ENCODE measurements at regions of chr13 and their contacts with region 1.

Region 1: DNA sequence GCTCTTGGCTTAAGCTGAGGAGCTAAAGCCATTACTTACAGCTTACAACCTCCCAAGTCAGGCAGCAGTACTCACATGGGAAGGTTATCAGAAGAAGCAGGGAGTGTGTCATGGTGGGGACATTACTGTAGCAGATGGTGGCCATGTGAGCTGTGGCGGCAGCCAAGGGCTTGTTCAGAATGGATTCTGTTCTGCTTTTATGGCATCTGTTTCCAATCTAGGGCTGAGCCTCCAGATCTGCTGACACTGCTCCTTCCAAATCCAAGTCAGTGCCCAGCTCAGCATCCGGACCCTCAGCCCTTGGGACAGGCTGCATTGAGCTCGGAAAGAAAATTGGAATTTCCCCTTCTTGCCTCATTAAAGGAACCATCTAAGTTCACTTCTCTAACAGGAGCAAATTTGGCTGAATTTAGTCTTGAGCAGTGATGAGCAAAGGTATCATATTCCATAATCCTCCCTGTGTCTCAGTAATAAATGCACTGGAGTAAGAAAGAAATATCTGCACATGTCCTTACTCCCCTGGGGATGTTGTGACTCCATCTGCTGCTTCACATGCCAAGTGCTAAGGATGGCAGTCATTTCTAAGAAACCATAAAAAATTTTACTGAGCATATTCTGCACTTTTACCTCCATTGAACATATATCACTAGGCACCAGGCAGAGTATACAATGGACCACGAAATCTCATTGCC is 73.9 kb downstream of the KCTD12 start:
- DNase-seq: peak; percentile 57 to 85 (median 65)
- ATAC-seq: peak; percentile 55 to 88 (median 86)
- H3K4me3 ChIP-seq: no peak overlapping the region
- H3K27ac ChIP-seq: peak overlapping the region in 9 of 12 donors; percentile 4 to 67 (median 50)
- H3K4me1 ChIP-seq: peaks cover 0 to 33% (median 19%) of the 10 kb centered on the region in 12 donors
- H3K27me3 ChIP-seq: no peaks in the 10 kb centered on the region
- CTCF ChIP-seq: no peak
- POLR2A ChIP-seq: no peak

Region 2: DNA sequence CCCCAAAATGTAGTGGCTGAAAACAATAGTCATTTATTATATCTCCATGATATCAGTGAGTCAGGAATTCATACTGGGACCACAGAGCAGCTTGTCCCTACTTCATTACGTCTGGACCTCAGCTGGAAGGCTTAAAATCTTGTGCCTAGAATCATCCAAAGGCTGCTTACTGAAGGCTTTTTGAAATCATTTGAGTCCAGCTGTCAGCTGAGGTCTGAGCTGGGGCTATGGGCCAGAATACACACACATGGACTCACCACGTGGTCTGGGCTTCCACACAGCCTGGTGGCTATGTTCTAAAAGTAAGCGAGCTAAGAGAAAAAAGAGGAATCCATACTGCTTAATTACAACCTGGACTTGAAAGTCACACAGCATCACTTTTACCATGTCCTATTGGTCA is 135.3 kb before region 1 on chr13:
- intact Hi-C with region 1: loop called in 1 of 10 experiments (anchors 10 kb)
- DNase-seq: peak; percentile 60 to 74 (median 66)
- ATAC-seq: peak; percentile 71 to 96 (median 94)
- H3K4me3 ChIP-seq: no peak overlapping the region
- H3K27ac ChIP-seq: peak overlapping the region in 5 of 12 donors; percentile 8 to 41 (median 20)
- H3K4me1 ChIP-seq: peaks cover 0 to 7% (median 0%) of the 10 kb centered on the region in 12 donors
- H3K27me3 ChIP-seq: no peaks in the 10 kb centered on the region
- CTCF ChIP-seq: no peak
- POLR2A ChIP-seq: no peak

Region 3: DNA sequence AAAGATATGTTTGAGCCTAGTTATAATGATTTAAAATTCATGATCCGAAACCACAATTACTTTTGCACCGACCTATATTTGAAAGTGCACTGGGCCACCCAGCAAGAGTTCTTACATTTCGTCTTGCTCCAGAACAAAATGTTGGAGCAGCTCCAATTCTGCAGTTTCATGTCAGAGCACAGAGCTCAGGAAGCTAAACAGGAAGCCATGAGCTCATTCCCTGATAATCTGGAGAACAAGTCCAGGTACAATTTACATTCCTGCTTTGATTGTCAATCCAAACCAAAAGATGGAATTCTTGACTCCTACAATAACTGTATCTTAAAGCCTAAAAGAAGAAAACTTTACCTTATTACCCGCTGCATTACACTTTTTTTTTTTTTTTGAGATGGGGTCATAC is 57.9 kb before region 1 on chr13:
- intact Hi-C with region 1: loop called in 1 of 10 experiments (anchors 10 kb)
- DNase-seq: peak in 4 of 5 donors; percentile 27 to 70 (median 52)
- ATAC-seq: peak; percentile 71 to 92 (median 76)
- H3K4me3 ChIP-seq: no peak overlapping the region
- H3K27ac ChIP-seq: peak overlapping the region in 9 of 12 donors; percentile 6 to 62 (median 31)
- H3K4me1 ChIP-seq: peaks cover 0 to 40% (median 1%) of the 10 kb centered on the region in 12 donors
- H3K27me3 ChIP-seq: no peaks in the 10 kb centered on the region
- CTCF ChIP-seq: no peak
- POLR2A ChIP-seq: no peak

Region 4: DNA sequence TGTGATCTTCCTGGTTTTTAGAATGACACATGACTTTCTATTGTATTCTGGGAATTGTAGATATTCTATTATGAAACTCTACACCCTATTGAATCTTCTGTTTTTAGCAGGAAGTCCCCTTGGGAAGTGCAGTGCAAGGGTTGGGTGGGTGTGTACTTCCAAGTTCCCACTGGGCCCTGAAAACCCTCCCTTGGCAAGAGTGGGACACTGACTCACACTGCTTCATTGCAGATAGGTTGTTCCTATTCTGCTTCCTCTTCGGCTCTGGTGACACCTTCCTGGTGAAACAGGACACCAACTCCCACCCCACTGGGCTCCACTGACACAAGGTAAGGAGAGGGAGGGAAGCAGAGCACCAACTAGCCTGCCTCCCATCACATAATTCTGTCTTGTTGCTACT is 47.9 kb before region 1 on chr13:
- intact Hi-C with region 1: loop called in 2 of 10 experiments (anchors 5 to 10 kb)
- DNase-seq: peak; percentile 63 to 87 (median 83)
- ATAC-seq: peak; percentile 95 to 99 (median 98)
- H3K4me3 ChIP-seq: peak overlapping the region in 8 of 12 donors; percentile 14 to 31 (median 26)
- H3K27ac ChIP-seq: peak overlapping the region; percentile 56 to 86 (median 75)
- H3K4me1 ChIP-seq: peaks cover 0 to 34% (median 16%) of the 10 kb centered on the region in 12 donors
- H3K27me3 ChIP-seq: no peaks in the 10 kb centered on the region
- CTCF ChIP-seq: no peak
- POLR2A ChIP-seq: no peak

Region 5: DNA sequence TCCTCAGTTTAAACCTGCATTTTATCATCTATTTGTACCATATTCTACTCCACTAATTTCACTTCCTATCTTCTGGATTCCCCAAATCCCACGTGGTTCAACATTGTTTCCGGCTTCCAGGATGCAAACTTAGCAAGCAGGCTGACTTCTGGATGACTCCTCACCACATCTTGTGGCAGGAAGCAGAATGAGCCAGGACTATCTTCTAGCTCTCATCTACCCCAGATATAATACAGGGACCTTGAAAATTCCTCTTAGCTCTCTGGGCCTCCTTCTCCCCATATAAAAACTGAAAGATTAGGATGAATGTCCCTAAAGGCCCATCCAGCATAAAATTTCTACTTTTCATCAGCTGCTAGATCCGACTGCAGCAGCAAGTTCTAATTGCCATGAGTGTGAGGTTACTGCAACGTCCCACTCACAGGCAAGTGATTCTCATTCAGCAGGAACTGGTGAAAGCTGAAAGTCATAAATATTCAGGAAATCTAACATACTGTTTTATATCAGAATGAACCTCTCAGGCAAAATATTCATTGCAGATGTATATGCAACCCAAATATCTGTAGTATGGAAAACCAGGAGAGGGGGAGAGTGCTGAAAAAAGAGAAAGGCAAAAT is 19.5 kb before region 1 on chr13:
- intact Hi-C with region 1: no loop called
- DNase-seq: peak in 4 of 5 donors; percentile 46 to 67 (median 58)
- ATAC-seq: peak; percentile 47 to 93 (median 82)
- H3K4me3 ChIP-seq: no peak overlapping the region
- H3K27ac ChIP-seq: peak overlapping the region in 9 of 12 donors; percentile 20 to 74 (median 42)
- H3K4me1 ChIP-seq: peaks cover 0 to 36% (median 24%) of the 10 kb centered on the region in 12 donors
- H3K27me3 ChIP-seq: no peaks in the 10 kb centered on the region
- CTCF ChIP-seq: no peak
- POLR2A ChIP-seq: no peak

Region 6: GRCh38 chr13:76874479-76874878 is 62.1 kb after region 1 on chr13:
- intact Hi-C with region 1: no loop called
- DNase-seq: no peak
- ATAC-seq: no peak
- H3K4me3 ChIP-seq: no peak overlapping the region
- H3K27ac ChIP-seq: peak overlapping the region in 2 of 12 donors; percentile 18 to 25
- H3K4me1 ChIP-seq: peaks cover 0 to 30% (median 8%) of the 10 kb centered on the region in 12 donors
- H3K27me3 ChIP-seq: no peaks in the 10 kb centered on the region
- CTCF ChIP-seq: no peak
- POLR2A ChIP-seq: no peak